Uterus (tissue), 4 donors: ENCODE measurements at regions of chr10 and their contacts with region 1.

Region 1: GRCh38 chr10:91251430-91252056 is 31.1 kb downstream of the PCGF5 start:
- DNase-seq: peak; percentile 33 to 45
- H3K4me3 ChIP-seq: no peak overlapping the region
- H3K27ac ChIP-seq: no peak overlapping the region
- H3K4me1 ChIP-seq: no peaks in the 10 kb centered on the region
- H3K27me3 ChIP-seq: no peaks in the 10 kb centered on the region
- CTCF ChIP-seq: peak; percentile 88 to 93 (median 92)
- POLR2A ChIP-seq: no peak

Region 2: GRCh38 chr10:90917238-90917967 is 334.1 kb before region 1 on chr10:
- intact Hi-C with region 1: loop called (anchors 5 kb)
- DNase-seq: no peak
- H3K4me3 ChIP-seq: no peak overlapping the region
- H3K27ac ChIP-seq: no peak overlapping the region
- H3K4me1 ChIP-seq: no peaks in the 10 kb centered on the region
- H3K27me3 ChIP-seq: no peaks in the 10 kb centered on the region
- CTCF ChIP-seq: no peak
- POLR2A ChIP-seq: no peak

Region 3: DNA sequence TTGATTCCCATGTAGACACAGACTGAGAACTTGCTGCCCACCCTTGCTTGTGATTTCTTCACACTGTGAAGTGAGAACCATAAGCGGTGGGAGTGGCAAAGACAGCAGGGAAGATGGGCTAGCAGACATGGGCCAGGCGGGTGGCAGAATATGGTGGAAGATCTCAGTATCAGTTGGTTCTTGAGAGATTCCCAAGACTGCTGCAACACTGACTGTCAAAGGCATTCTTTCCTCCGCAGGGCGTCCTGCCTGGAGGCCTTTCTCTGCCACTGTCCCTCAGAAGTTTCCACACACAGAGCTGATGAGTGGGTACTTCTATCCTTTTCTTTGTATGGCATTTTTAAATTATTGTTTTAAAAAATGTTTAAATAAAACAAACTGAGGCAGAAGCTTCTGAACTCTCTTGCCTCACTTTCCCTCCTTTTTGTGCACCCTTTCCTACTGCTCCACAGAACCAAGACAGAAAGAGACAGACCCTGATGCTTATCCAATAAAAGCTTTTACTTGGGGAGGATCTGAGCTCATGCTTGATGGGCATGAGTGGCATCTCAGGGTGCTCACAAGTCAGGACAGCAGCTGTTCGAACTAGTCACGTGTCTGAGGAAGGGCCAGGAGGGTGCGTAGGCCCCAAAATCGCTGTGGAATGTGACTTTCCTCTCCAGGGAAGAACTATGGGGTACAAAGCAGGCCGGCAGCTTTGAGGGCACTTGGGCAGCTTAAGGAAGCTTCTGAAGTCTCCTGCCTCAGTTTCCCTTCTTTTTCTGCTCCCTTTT is 135.7 kb before region 1 on chr10:
- intact Hi-C with region 1: no loop called
- DNase-seq: no peak
- H3K4me3 ChIP-seq: no peak overlapping the region
- H3K27ac ChIP-seq: no peak overlapping the region
- H3K4me1 ChIP-seq: no peaks in the 10 kb centered on the region
- H3K27me3 ChIP-seq: no peaks in the 10 kb centered on the region
- CTCF ChIP-seq: no peak
- POLR2A ChIP-seq: no peak